Naive thymus-derived CD4-positive, alpha-beta T cell (primary cell): ENCODE measurements at regions of chr2 and their contacts with region 1.

Region 1: GRCh38 chr2:58240670-58241545 is at the start of gene FANCL:
- DNase-seq: peak; percentile 21 to 83 (median 42)
- ATAC-seq: peak; percentile 76
- H3K4me3 ChIP-seq: peak within 1 kb of the TSS; percentile 68
- H3K4me3 Mint-ChIP-seq: peak within 1 kb of the TSS; percentile 92 to 99 (median 93)
- H3K27ac ChIP-seq: peak within 1 kb of the TSS; percentile 1
- H3K27ac Mint-ChIP-seq: peak within 1 kb of the TSS; percentile 28 to 89 (median 68)
- H3K4me1 ChIP-seq: peaks cover 0 to 4% of the 10 kb centered on the region in 2 donors
- H3K4me1 Mint-ChIP-seq: peaks cover 3 to 34% (median 15%) of the 10 kb centered on the region in 7 donors
- H3K27me3 ChIP-seq: no peaks in the 10 kb centered on the region
- H3K27me3 Mint-ChIP-seq: peaks cover 5 to 16% (median 13%) of the 10 kb centered on the region in 5 donors
- total RNA-seq, gene FANCL: 1.9 to 14.5 (median 4.0) TPM

Region 2: GRCh38 chr2:57443973-57444521 is 796.9 kb before region 1 on chr2:
- CTCF ChIA-PET with region 1: no interaction called
- POLR2A ChIA-PET with region 1: no interaction called
- intact Hi-C with region 1: no loop called
- DNase-seq: no peak
- ATAC-seq: peak; percentile 86
- H3K4me3 ChIP-seq: no peak overlapping the region
- H3K4me3 Mint-ChIP-seq: no peak overlapping the region
- H3K27ac ChIP-seq: no peak overlapping the region
- H3K27ac Mint-ChIP-seq: no peak overlapping the region
- H3K4me1 ChIP-seq: no peaks in the 10 kb centered on the region
- H3K4me1 Mint-ChIP-seq: no peaks in the 10 kb centered on the region
- H3K27me3 ChIP-seq: no peaks in the 10 kb centered on the region
- H3K27me3 Mint-ChIP-seq: no peaks in the 10 kb centered on the region

Region 3: GRCh38 chr2:58046585-58047372 is 194.1 kb before region 1 on chr2 and contains the start of gene VRK2:
- CTCF ChIA-PET with region 1: no interaction called
- POLR2A ChIA-PET with region 1: no interaction called
- intact Hi-C with region 1: loop called (anchors 1 to 2 kb)
- DNase-seq: peak; percentile 72 to 86 (median 85)
- ATAC-seq: peak; percentile 94
- H3K4me3 ChIP-seq: peak within 1 kb of the TSS; percentile 67
- H3K4me3 Mint-ChIP-seq: peak within 1 kb of the TSS; percentile 87 to 94 (median 92)
- H3K27ac ChIP-seq: peak within 1 kb of the TSS; percentile 84
- H3K27ac Mint-ChIP-seq: peak within 1 kb of the TSS; percentile 91 to 97 (median 94)
- H3K4me1 ChIP-seq: peaks cover 18 to 20% of the 10 kb centered on the region in 2 donors
- H3K4me1 Mint-ChIP-seq: peaks cover 27 to 55% (median 51%) of the 10 kb centered on the region in 7 donors
- H3K27me3 ChIP-seq: no peaks in the 10 kb centered on the region
- H3K27me3 Mint-ChIP-seq: no peaks in the 10 kb centered on the region
- total RNA-seq, gene VRK2: 13.1 to 24.5 (median 14.1) TPM

Region 4: DNA sequence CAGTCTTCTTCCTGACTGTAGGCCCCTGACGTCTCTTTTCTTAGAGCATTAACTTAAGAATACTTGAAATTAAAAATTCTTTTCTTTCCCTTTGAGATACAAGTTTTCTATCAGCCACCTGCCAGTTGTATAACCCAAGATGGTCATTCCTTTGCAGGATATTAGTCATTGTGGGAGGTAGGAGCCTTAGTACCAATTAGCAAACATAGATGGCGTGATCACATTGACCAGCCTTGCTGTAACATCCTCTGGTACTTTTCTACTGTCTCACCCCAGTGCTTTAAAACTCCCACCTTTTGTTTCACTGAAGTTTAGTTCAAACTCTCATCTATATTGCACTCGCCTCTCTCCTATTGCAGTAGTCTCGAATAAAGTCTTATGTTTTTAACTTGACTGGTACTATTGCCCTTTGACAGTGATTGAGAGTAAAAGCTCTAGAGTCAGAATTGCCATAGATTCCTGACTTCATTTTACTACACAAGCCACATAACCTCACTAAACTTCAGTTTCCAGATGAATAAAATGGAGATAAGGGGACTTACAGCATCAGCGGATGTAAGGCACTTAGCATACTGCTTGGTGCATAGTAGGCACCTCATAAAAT is 120.2 kb before region 1 on chr2:
- CTCF ChIA-PET with region 1: no interaction called
- POLR2A ChIA-PET with region 1: no interaction called
- intact Hi-C with region 1: no loop called
- DNase-seq: no peak
- ATAC-seq: no peak
- H3K4me3 ChIP-seq: no peak overlapping the region
- H3K4me3 Mint-ChIP-seq: no peak overlapping the region
- H3K27ac ChIP-seq: no peak overlapping the region
- H3K27ac Mint-ChIP-seq: no peak overlapping the region
- H3K4me1 ChIP-seq: no peaks in the 10 kb centered on the region
- H3K4me1 Mint-ChIP-seq: peaks cover 0 to 1% (median 0%) of the 10 kb centered on the region in 7 donors
- H3K27me3 ChIP-seq: no peaks in the 10 kb centered on the region
- H3K27me3 Mint-ChIP-seq: no peaks in the 10 kb centered on the region